ENCODE measurements at regions of chr7 and their contacts with region 1.

Region 1: DNA sequence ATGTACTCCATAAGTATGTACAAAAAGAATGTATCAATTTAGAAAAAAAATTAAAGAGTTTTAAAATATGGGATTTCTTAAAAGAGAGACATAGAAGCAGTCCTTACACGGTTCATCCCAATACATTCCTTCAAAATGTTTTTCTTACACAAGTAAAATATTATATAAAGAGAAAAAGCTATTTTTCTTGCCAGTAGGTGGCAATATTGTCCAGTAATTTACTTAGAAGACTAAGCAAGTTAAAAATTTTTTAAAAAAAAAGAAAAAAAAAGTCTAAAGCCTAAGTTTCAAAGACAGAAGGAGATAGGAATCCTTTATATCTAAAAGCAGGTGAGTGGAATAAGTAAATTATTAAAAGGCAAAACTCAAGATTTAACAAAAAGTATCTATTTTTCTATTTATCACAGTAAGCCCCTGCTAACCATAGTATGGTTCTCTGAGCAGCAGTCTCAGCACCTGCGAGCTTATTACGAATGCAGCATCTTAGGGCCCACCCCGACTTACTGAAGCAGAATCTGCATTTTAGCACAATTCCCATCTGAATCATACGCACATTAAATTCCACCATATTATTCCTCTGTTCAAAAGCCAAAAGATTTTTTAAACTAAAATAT is 240.6 kb downstream of the DGKI start:
- DNase-seq: peak; percentile 67
- H3K4me3 ChIP-seq: no peak overlapping the region
- H3K27ac ChIP-seq: no peak overlapping the region
- H3K4me1 ChIP-seq: no peaks in the 10 kb centered on the region
- H3K27me3 ChIP-seq: peaks cover 15% of the 10 kb centered on the region
- CTCF ChIP-seq: peak; percentile 67

Region 2: DNA sequence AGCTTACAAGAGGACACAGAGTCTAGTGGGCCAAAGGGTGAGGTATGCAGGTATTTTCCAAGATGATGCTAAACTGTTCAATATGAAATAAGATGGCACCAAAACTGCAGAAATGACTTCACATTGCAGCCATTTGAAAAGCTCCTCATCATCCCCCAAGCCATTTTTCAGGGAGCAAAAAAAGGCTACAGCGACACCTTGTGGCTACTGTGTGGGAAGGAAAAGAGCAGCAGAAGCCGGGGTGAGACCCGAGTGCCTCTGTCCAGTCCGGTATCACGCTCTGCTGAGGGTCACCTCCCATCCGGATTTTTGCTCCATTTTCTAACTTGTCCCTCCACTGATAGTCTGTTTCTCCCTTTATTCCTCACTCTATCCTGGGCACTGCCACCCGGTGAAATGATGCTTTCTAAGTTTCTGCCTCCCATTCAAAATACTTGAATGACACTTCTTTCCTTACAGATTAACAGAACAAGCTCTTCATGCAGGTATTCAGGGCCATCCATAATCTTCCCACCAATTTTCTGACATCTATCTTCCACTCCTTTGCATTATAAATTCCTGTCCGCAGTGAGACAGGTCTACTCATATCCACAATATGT is 20.4 kb after region 1 on chr7:
- CTCF ChIA-PET with region 1: interaction called, 7 read pairs
- POLR2A ChIA-PET with region 1: no interaction called
- intact Hi-C with region 1: loop called (anchors 2 kb)
- DNase-seq: peak; percentile 69
- H3K4me3 ChIP-seq: no peak overlapping the region
- H3K27ac ChIP-seq: no peak overlapping the region
- H3K4me1 ChIP-seq: no peaks in the 10 kb centered on the region
- H3K27me3 ChIP-seq: peaks cover 5% of the 10 kb centered on the region
- CTCF ChIP-seq: peak; percentile 81

Region 3: DNA sequence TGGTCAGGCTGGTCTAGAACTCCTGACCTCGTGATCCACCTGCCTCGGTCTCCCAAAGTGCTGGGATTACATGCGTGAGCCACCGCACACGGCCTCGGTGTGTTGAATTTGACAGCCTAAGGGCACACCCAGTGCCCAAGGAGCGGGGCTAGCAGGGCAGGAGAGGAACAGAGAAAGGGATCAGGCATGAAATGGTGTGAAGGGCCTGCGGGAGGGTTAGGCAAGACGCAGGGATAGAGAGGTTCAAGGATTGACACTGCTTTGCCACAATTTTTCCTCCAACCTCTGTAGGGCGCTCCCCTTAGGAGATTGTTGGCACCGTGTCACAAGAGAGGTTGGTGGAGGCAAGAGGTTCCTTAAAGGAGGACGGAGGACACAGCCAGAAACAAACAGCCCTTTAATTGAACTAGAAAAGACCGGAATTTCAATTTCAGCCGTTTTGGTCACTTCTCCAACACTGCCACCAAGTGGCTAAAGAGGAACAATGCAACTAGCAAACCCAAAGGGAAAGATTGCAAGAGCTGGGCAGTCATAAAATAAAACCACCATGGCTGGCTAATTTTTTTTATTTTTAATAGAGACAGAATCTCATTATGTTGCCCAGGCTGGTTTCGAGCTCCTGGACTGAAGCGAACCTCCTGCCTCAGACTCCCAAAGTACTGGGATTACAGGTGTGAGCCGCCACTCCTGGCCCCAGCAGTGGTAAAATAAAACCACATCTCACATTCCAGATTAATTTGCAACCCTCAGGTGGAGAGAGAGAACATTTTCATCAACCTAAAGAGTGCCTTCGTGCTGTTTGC is 402.6 kb after region 1 on chr7:
- CTCF ChIA-PET with region 1: no interaction called
- POLR2A ChIA-PET with region 1: no interaction called
- intact Hi-C with region 1: loop called (anchors 5 kb)
- DNase-seq: peak; percentile 74
- H3K4me3 ChIP-seq: no peak overlapping the region
- H3K27ac ChIP-seq: no peak overlapping the region
- H3K4me1 ChIP-seq: no peaks in the 10 kb centered on the region
- H3K27me3 ChIP-seq: no peaks in the 10 kb centered on the region
- CTCF ChIP-seq: peak; percentile 84